Naive thymus-derived CD8-positive, alpha-beta T cell (primary cell): ENCODE measurements at regions of chr2 and their contacts with region 1.

Region 1: DNA sequence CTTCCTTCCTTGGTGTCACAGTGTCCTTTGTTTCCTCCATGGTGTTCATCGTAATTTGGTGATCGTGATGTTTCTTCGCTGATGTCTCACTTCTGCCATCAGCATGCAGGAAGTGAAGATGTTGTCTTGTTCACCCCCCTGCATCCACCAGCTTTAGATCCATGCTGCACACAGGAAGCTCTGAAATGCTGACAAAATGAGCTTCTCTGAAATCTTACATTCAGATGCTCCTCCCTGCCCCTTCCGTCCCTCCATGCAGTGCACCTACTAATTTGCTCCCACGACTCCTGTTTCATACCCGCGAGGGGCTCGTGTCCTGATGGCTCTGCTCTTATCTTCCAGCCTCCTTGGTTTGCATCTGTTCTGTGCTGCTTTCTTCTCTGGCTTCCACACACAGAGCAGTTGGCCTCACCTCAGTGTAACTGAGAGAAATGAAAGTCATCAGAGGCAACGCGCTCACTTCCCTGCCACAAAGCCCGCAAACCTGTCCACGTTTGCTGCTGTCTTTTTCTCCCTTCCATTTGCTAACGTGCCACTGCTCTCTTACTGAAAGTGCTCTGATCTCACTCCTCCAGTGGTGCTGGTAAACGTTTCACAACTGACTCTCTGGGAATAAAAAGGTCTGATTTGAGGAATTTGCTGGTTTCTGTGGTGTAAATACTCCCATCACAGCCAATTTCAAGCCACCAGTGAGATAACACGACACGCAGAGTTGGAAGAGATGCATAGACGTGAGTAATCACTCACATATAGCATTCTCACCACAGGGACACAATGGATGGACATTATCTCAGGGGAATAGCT is 41.0 kb upstream of the MGAT4A start:
- DNase-seq: peak; percentile 32 to 91 (median 78)
- ATAC-seq: peak; percentile 68 to 78
- H3K4me3 Mint-ChIP-seq: peak overlapping the region; percentile 82 to 96 (median 93)
- H3K27ac Mint-ChIP-seq: peak overlapping the region; percentile 96 to 100 (median 98)
- H3K4me1 Mint-ChIP-seq: peaks cover 48 to 86% (median 74%) of the 10 kb centered on the region in 4 donors
- H3K27me3 Mint-ChIP-seq: no peaks in the 10 kb centered on the region

Region 2: DNA sequence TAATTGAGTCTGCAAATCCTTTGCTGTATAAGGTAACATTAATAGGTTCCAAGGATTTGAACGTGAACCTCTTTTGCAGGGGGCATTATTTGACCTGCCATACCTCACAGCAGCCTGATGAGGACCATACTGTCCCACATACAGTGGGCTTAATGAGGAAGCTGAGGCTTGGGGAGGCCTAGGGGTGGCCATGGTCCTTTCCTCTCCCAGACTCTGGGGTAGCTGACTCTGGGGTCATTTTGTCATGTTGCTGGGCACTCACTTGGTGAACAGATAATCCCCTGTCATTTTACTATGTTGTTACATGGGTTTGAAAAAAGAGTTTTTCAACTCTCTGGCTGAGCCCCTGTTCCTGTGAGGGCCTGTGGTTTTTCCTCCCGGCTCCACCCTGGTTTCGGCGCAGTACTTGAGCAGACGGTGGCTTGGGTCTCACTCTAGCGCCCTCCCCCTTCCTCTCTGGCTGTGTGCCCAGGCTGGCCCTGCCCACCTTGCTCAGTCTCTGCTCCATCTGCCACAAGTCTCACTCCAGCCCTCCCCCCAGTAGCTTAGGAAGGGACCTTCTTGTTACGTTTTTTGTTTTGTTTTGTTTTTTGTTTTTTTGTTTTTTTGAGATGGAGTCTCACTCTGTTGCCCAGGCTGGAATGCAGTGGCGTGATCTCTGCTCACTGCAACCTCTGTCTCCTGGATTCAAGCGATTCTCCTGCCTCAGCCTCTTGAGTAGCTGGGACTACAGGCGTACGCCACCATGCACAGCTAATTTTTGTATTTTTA is 306.3 kb before region 1 on chr2:
- POLR2A ChIA-PET with region 1: interaction called, 10 read pairs
- DNase-seq: peak; percentile 69 to 92 (median 86)
- ATAC-seq: peak; percentile 69 to 74
- H3K4me3 Mint-ChIP-seq: peak overlapping the region; percentile 77 to 94 (median 88)
- H3K27ac Mint-ChIP-seq: peak overlapping the region; percentile 89 to 99 (median 98)
- H3K4me1 Mint-ChIP-seq: peaks cover 61 to 95% (median 88%) of the 10 kb centered on the region in 4 donors
- H3K27me3 Mint-ChIP-seq: no peaks in the 10 kb centered on the region

Region 3: DNA sequence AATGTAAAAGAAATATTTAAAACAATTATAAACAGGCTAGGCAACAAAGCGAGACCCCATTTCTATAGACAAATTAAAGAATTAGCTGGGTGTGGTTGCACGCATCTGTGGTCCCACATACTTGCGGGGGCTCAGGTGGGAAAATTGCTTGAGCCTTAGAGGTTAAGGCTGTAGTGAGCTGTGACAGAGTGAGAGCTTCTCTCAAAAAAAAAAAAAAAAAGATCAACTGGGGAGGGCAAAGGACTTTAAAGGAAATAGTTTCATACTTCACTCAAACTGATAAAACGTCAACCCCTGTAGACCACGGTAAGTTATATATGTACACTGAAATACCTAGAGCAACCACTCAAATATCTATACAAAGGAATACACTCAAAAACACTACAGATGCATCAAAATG is 78.4 kb before region 1 on chr2:
- POLR2A ChIA-PET with region 1: interaction called, 10 read pairs
- DNase-seq: peak in 3 of 10 donors; percentile 22 to 55 (median 40)
- ATAC-seq: peak; percentile 73 to 76
- H3K4me3 Mint-ChIP-seq: peak overlapping the region; percentile 52 to 84 (median 74)
- H3K27ac Mint-ChIP-seq: peak overlapping the region; percentile 80 to 96 (median 88)
- H3K4me1 Mint-ChIP-seq: peaks cover 41 to 97% (median 84%) of the 10 kb centered on the region in 4 donors
- H3K27me3 Mint-ChIP-seq: no peaks in the 10 kb centered on the region

Region 4: GRCh38 chr2:98731041-98731893 is 40.7 kb before region 1 on chr2 and contains the start of gene MGAT4A:
- POLR2A ChIA-PET with region 1: interaction called, 360 read pairs
- DNase-seq: peak; percentile 72 to 88 (median 82)
- ATAC-seq: peak; percentile 76 to 77
- H3K4me3 Mint-ChIP-seq: peak within 1 kb of the TSS; percentile 73 to 98 (median 92)
- H3K27ac Mint-ChIP-seq: peak within 1 kb of the TSS; percentile 94 to 99 (median 97)
- H3K4me1 Mint-ChIP-seq: peaks cover 22 to 62% (median 58%) of the 10 kb centered on the region in 4 donors
- H3K27me3 Mint-ChIP-seq: no peaks in the 10 kb centered on the region
- polyA plus RNA-seq, gene MGAT4A: 285 to 350 (median 310) TPM

Region 5: DNA sequence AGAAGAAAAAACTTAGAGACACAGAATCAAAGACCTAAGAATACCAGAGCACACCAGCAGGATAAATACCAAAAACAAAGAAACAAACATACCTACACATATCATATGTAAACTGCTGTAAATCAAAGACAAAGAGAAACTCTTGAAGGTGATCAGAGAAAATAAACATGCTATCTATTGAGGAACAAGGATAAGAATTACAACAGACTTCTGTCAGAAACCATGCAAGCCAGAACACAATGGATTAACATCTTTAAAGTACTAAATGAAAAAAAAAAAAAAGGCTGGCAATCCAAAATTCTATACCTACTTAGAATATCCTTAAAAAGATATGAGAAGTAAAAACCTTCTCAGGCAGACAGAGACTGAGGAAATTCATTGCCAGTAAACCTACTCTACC is 10.6 kb after region 1 on chr2:
- POLR2A ChIA-PET with region 1: interaction called, 12 read pairs
- DNase-seq: no peak
- ATAC-seq: no peak
- H3K4me3 Mint-ChIP-seq: no peak overlapping the region
- H3K27ac Mint-ChIP-seq: no peak overlapping the region
- H3K4me1 Mint-ChIP-seq: peaks cover 0 to 1% (median 0%) of the 10 kb centered on the region in 4 donors
- H3K27me3 Mint-ChIP-seq: no peaks in the 10 kb centered on the region

Region 6: GRCh38 chr2:98835831-98836385 is 64.0 kb after region 1 on chr2:
- POLR2A ChIA-PET with region 1: interaction called, 18 read pairs
- DNase-seq: peak in 9 of 10 donors; percentile 40 to 81 (median 69)
- ATAC-seq: peak; percentile 85 to 92
- H3K4me3 Mint-ChIP-seq: peak overlapping the region; percentile 43 to 83 (median 64)
- H3K27ac Mint-ChIP-seq: peak overlapping the region; percentile 83 to 98 (median 93)
- H3K4me1 Mint-ChIP-seq: peaks cover 14 to 44% (median 37%) of the 10 kb centered on the region in 4 donors
- H3K27me3 Mint-ChIP-seq: no peaks in the 10 kb centered on the region

Region 7: GRCh38 chr2:98846041-98846440 is 74.1 kb after region 1 on chr2:
- POLR2A ChIA-PET with region 1: no interaction called
- DNase-seq: no peak
- ATAC-seq: no peak
- H3K4me3 Mint-ChIP-seq: no peak overlapping the region
- H3K27ac Mint-ChIP-seq: no peak overlapping the region
- H3K4me1 Mint-ChIP-seq: no peaks in the 10 kb centered on the region
- H3K27me3 Mint-ChIP-seq: peaks cover 5 to 20% (median 8%) of the 10 kb centered on the region in 5 donors

Region 8: GRCh38 chr2:99365661-99366060 is 593.7 kb after region 1 on chr2:
- POLR2A ChIA-PET with region 1: no interaction called
- DNase-seq: no peak
- ATAC-seq: no peak
- H3K4me3 Mint-ChIP-seq: no peak overlapping the region
- H3K27ac Mint-ChIP-seq: peak overlapping the region in 1 of 10 donors; percentile 20
- H3K4me1 Mint-ChIP-seq: no peaks in the 10 kb centered on the region
- H3K27me3 Mint-ChIP-seq: no peaks in the 10 kb centered on the region